Ovary (tissue), 10 donors: ENCODE measurements at regions of chr12 and their contacts with region 1.

Region 1: DNA sequence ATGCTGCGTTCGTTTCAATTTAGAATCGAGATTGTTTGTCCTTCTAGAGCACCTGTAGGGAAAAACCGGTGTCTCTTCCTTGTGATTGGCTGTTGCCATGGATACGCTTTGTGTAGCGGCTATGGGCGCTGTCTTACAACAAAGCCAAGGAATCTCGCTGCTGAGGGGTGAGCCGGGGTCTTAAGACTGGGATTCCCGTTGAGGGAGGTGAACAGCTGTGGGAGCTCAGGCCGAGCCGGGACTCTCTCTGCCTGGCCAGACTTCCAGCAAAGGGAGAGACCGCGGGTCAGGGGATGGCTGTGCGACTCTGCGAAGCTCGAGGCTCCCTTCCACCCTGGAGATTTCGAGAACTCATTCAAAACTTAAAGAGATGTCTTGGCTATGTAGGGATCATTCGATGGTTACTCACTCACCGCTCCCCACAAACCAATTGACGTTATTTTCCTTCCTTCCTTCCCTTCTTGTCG is at the starts of genes LRRIQ1 and TSPAN19:
- DNase-seq: peak; percentile 12 to 45 (median 33)
- H3K4me3 ChIP-seq: peak within 1 kb of the TSS; percentile 44
- H3K27ac ChIP-seq: no peak within 1 kb of the TSS
- H3K4me1 ChIP-seq: peaks cover 2% of the 10 kb centered on the region
- H3K27me3 ChIP-seq: no peaks in the 10 kb centered on the region
- CTCF ChIP-seq: no peak
- EP300 ChIP-seq: no peak
- POLR2A ChIP-seq: no peak
- total RNA-seq, gene LRRIQ1: 0.43 to 18.6 (median 2.0) TPM in 6 of 7 donors, not detected in the other
- total RNA-seq, gene TSPAN19: not detected

Region 2: DNA sequence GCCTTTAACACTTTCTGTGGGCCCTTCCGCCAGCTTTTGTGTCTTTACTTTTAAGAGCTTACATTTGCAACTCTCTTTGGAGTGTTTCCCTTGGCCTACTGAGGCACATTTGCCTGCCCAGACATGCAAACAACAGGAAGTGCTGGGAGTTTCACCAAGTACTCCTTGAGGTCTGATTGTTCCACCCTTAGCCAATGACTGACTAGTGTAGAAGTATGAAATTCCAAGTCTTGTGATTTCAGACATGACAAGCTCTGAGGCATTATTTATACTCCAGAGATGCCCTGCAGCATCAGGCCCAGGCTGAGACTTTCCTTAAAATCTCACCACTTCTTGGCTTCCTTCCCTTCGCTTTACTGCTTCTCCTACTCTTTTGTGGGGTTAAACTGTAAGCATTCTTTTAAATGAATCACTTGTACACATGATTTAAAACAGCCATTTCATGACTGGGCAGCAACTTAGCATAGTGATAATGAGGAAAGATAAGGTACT is 297.7 kb before region 1 on chr12:
- intact Hi-C with region 1: no loop called
- DNase-seq: no peak
- H3K4me3 ChIP-seq: no peak overlapping the region
- H3K27ac ChIP-seq: no peak overlapping the region
- H3K4me1 ChIP-seq: no peaks in the 10 kb centered on the region
- H3K27me3 ChIP-seq: no peaks in the 10 kb centered on the region
- CTCF ChIP-seq: no peak
- EP300 ChIP-seq: no peak
- POLR2A ChIP-seq: no peak

Region 3: DNA sequence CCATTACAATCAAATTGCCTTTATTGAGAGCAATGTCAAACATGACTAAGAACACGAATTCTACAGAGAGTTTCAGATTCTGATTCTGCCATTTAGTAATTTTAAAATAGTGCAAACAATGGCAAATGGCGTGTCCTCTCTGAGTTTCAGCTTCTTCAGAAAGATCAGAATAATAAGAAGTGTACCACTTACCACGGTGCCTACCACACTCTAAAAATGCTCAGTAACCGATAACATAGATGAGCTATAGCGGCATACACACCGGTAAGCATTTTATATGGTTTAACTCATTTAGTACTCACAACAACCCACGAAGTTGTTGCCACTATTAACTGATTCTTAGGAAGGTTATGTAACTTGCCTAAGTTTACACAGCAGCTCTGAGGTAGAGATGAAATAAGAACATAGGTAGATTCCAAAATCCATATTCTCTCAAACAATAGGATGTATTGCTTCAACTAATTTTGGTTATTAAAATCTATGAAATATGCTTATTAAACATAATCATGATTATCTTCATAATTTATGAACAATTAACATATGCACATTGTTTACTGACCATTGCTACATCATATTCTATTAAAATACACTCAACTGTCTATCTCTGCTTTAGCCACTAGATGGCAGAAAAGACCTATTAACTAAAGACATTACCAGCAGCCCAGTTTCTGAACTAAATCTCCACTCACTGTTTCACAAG is 162.0 kb before region 1 on chr12:
- intact Hi-C with region 1: loop called in 2 of 4 experiments (anchors 5 to 10 kb)
- DNase-seq: no peak
- H3K4me3 ChIP-seq: no peak overlapping the region
- H3K27ac ChIP-seq: no peak overlapping the region
- H3K4me1 ChIP-seq: no peaks in the 10 kb centered on the region
- H3K27me3 ChIP-seq: no peaks in the 10 kb centered on the region
- CTCF ChIP-seq: peak in 2 of 3 donors; percentile 25 to 31
- EP300 ChIP-seq: no peak
- POLR2A ChIP-seq: no peak